SK-N-SH (cell line): ENCODE measurements at regions of chr15 and their contacts with region 1.

Region 1: DNA sequence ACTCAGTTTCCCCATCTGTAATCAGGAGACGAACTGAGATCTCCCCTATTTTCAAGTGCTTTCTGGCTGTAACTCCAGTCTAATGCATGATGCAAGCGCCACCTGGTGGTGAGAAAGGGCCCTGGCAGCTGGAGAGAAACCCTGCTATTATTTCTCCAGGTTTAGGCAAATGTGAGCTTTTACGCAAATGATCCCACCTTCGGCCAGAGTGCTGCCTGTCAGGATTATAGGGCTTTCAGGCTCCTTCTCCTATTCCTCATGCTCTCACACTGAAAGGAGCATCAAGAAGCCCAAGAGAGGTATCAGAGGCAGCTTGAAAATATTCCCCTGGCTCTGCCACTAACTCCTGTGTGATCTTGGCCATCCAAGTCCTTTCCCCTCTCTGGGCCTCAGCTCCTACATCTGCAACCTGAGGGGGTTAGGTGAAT is 93.9 kb upstream of the RASGRF1 start:
- DNase-seq: peak; percentile 77
- H3K4me3 ChIP-seq: peak overlapping the region in 1 of 2 experiments; percentile 12; a peak in 1 of 4 replicates
- H3K27ac ChIP-seq: no peak overlapping the region
- H3K4me1 ChIP-seq: no peaks in the 10 kb centered on the region
- H3K27me3 ChIP-seq: 0 out of 2 replicates have a peak, but pooled peaks cover 5% of the 10 kb centered on the region
- CTCF ChIP-seq: peak; percentile 98
- EP300 ChIP-seq: no peak
- RAD21 ChIP-seq: peak; percentile 94

Region 2: GRCh38 chr15:78909791-78910228 is 274.7 kb before region 1 on chr15:
- CTCF ChIA-PET with region 1: interaction called, 53 read pairs
- POLR2A ChIA-PET with region 1: no interaction called
- DNase-seq: peak; percentile 72
- H3K4me3 ChIP-seq: no peak overlapping the region; a peak in 1 of 4 replicates
- H3K27ac ChIP-seq: no peak overlapping the region
- H3K4me1 ChIP-seq: peaks cover 0 to 11% of the 10 kb centered on the region in 2 experiments; a peak in 3 of 4 replicates
- H3K27me3 ChIP-seq: no peaks in the 10 kb centered on the region
- CTCF ChIP-seq: peak; percentile 78
- EP300 ChIP-seq: no peak
- RAD21 ChIP-seq: peak; percentile 78

Region 3: DNA sequence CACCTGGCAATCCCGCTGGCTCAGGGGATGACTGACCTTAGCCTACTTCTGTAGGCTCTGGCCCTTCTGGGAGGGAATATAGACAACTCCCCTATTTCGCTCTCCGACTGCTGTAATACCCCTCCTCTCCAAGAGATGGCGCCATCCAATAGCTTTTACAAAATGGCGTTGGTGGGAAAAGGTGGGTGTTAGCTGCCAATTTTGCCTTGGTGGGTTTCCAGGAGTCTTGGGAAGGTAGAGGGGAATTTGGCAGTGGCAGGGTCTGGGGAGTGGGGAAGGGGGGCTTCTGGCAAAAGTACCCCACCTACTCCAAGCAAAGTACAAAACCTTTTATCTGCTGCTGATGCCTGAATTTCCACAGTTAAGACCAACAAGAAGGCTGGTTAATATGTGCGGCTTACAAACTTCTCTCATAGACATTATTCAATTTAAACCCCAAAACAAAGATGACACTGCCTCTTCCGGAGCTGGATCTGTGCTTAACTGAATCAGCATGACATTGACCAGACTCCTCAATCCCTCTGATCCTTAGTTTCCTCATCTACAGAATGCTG is 156.0 kb before region 1 on chr15:
- CTCF ChIA-PET with region 1: interaction called, 629 read pairs
- POLR2A ChIA-PET with region 1: no interaction called
- DNase-seq: peak; percentile 79
- H3K4me3 ChIP-seq: no peak overlapping the region; a peak in 1 of 4 replicates
- H3K27ac ChIP-seq: no peak overlapping the region
- H3K4me1 ChIP-seq: no peaks in the 10 kb centered on the region; a peak in 1 of 4 replicates
- H3K27me3 ChIP-seq: no peaks in the 10 kb centered on the region; the same call in 1 of the 2 replicates
- CTCF ChIP-seq: peak; percentile 88
- EP300 ChIP-seq: no peak
- RAD21 ChIP-seq: peak; percentile 94

Region 4: DNA sequence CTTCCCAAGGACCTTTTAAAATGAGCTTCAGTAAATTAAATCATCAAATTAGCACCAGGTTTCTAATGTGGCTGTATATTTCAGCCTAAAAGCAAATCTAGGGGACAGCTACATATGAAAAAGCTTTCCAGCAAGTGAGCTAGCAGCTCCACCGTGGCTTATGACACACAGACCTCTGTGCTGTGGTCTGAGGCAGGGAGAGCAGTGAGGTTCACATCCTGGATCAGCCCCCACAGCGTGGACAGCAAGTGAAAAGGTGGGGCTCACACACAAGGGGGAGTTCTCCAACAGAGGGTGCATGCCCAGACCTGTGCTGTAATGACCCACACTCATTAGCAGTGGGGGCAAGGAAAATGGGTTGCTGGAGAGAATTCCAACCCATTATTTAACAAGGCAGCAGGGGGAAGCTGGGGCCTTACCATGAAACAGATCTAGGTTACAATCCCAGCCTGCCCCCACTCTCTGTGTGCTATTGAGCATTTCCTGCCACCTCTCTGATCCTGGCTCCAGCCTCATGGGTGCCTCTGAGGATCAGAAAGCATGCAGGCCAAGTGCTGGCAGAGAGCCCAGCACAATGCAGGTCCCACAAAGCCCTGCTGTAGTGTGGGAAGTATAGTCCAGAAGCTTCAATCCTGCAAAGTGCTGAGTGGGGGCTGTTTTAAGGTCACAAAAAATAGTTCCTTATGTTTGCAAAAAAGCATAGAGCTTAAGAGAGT is 142.1 kb before region 1 on chr15:
- CTCF ChIA-PET with region 1: interaction called, 15 read pairs
- POLR2A ChIA-PET with region 1: no interaction called
- DNase-seq: no peak
- H3K4me3 ChIP-seq: no peak overlapping the region
- H3K27ac ChIP-seq: no peak overlapping the region
- H3K4me1 ChIP-seq: peaks cover 0 to 8% of the 10 kb centered on the region in 2 experiments; a peak in 1 of 4 replicates
- H3K27me3 ChIP-seq: peaks cover 4% of the 10 kb centered on the region; the same call in 1 of the 2 replicates
- CTCF ChIP-seq: no peak
- EP300 ChIP-seq: no peak
- RAD21 ChIP-seq: no peak

Region 5: GRCh38 chr15:79122991-79123390 is 61.5 kb before region 1 on chr15:
- CTCF ChIA-PET with region 1: interaction called, 24 read pairs
- POLR2A ChIA-PET with region 1: no interaction called
- DNase-seq: no peak
- H3K4me3 ChIP-seq: no peak overlapping the region
- H3K27ac ChIP-seq: no peak overlapping the region
- H3K4me1 ChIP-seq: no peaks in the 10 kb centered on the region
- H3K27me3 ChIP-seq: no peaks in the 10 kb centered on the region
- CTCF ChIP-seq: no peak
- EP300 ChIP-seq: no peak
- RAD21 ChIP-seq: no peak

Region 6: DNA sequence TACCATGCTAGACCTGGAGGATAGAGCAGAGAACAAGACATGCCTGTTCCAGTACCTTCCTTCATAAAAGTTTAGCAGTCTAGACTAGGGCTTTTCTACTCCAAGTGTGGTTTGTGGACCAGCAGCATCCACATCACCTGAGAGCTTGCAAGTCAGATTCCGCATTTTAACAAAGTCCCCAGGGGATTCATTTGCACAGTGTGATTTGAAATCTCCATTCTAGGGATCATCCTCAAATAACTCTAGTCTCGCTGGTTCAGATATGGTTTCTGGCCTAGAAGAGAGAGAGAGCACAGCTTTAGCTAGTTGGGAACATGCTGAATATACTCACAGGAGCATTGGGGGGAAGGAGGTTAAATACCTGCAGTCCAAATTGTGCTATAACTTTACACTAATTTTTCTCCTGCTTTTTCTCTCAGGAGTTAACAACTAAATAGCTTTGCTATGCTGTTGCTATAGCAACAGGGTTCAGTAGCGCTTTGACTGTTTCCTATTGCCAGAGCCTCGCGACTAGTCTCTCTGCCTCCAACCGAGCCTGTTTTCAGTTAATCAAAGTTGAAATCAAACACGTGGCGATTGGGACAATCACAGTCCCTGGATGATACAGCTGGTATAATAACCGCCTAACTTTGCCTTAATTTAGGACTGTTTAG is 29.9 kb before region 1 on chr15:
- CTCF ChIA-PET with region 1: interaction called, 12 read pairs
- POLR2A ChIA-PET with region 1: no interaction called
- DNase-seq: peak; percentile 42
- H3K4me3 ChIP-seq: no peak overlapping the region
- H3K27ac ChIP-seq: no peak overlapping the region
- H3K4me1 ChIP-seq: peaks cover 0 to 8% of the 10 kb centered on the region in 2 experiments; a peak in 2 of 4 replicates
- H3K27me3 ChIP-seq: no peaks in the 10 kb centered on the region
- CTCF ChIP-seq: no peak
- EP300 ChIP-seq: no peak
- RAD21 ChIP-seq: no peak

Region 7: GRCh38 chr15:79198461-79199209 is 14.2 kb after region 1 on chr15:
- CTCF ChIA-PET with region 1: interaction called, 27 read pairs
- POLR2A ChIA-PET with region 1: no interaction called
- DNase-seq: no peak
- H3K4me3 ChIP-seq: no peak overlapping the region
- H3K27ac ChIP-seq: no peak overlapping the region
- H3K4me1 ChIP-seq: no peaks in the 10 kb centered on the region
- H3K27me3 ChIP-seq: no peaks in the 10 kb centered on the region
- CTCF ChIP-seq: no peak
- EP300 ChIP-seq: no peak
- RAD21 ChIP-seq: no peak

Region 8: DNA sequence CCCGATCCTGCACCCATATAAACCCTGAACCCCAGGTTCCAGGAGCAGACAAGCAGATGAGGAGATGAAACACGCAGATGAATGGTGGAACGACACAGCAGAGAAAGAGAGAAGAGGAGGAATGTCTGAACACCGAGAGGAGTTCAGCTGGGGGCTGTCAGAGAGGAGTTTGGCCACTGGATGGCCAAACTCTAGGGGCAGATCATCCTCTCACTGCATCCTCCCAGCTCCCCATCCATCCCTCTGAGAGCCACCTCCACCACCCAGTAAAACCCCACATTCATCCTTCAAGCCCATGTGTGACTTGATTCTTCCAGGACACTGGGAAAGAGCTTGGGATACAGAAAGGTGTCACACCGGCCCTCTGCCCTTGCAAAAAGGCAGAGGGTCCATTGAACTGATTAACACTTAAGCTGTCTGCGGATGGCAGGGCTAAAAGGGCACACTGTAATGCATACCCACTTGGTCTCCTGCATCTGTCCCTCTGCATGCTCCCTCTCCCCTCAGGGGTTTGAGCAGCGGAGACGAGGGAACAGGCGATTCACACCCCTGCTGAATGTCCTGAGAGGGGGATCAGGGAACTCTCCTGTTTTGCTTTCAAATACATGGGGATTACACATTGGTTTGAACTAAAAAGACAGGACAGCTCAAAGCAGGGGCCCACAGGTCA is 180.2 kb after region 1 on chr15:
- CTCF ChIA-PET with region 1: no interaction called
- POLR2A ChIA-PET with region 1: no interaction called
- DNase-seq: peak; percentile 26
- H3K4me3 ChIP-seq: no peak overlapping the region
- H3K27ac ChIP-seq: peak overlapping the region; percentile 41 to 63; a peak in 2 of 4 replicates
- H3K4me1 ChIP-seq: peaks cover 10 to 24% of the 10 kb centered on the region in 2 experiments; a peak in 2 of 4 replicates
- H3K27me3 ChIP-seq: no peaks in the 10 kb centered on the region
- CTCF ChIP-seq: no peak
- EP300 ChIP-seq: no peak
- RAD21 ChIP-seq: no peak

Region 9: GRCh38 chr15:79582650-79583049 is 398.2 kb after region 1 on chr15:
- CTCF ChIA-PET with region 1: no interaction called
- POLR2A ChIA-PET with region 1: no interaction called
- DNase-seq: no peak
- H3K4me3 ChIP-seq: no peak overlapping the region
- H3K27ac ChIP-seq: no peak overlapping the region
- H3K4me1 ChIP-seq: no peaks in the 10 kb centered on the region
- H3K27me3 ChIP-seq: no peaks in the 10 kb centered on the region
- CTCF ChIP-seq: no peak
- EP300 ChIP-seq: no peak
- RAD21 ChIP-seq: no peak

Region 10: DNA sequence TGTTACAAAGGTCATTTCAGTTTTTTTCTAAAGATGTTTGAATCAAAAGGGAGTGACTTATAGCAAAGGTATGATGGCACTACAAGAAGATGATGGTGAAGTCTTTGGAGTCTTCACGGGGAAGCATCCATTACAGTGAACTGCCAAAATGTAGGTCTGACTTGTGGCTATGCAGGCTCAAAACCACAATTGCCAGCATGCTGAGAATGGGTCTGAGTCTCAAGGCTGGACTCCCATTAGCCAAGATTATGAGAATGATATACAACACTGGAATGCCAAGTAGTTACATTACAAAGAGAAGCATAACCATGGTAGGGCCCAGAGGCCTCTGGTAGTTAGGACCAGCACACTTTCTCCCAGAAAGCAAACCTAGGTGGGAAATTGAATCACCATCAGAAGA is 518.1 kb after region 1 on chr15:
- CTCF ChIA-PET with region 1: no interaction called
- POLR2A ChIA-PET with region 1: no interaction called
- DNase-seq: no peak
- H3K4me3 ChIP-seq: no peak overlapping the region
- H3K27ac ChIP-seq: no peak overlapping the region
- H3K4me1 ChIP-seq: no peaks in the 10 kb centered on the region
- H3K27me3 ChIP-seq: no peaks in the 10 kb centered on the region
- CTCF ChIP-seq: no peak
- EP300 ChIP-seq: no peak
- RAD21 ChIP-seq: no peak